ENCODE measurements at regions of chr7 and their contacts with region 1.

Region 1: DNA sequence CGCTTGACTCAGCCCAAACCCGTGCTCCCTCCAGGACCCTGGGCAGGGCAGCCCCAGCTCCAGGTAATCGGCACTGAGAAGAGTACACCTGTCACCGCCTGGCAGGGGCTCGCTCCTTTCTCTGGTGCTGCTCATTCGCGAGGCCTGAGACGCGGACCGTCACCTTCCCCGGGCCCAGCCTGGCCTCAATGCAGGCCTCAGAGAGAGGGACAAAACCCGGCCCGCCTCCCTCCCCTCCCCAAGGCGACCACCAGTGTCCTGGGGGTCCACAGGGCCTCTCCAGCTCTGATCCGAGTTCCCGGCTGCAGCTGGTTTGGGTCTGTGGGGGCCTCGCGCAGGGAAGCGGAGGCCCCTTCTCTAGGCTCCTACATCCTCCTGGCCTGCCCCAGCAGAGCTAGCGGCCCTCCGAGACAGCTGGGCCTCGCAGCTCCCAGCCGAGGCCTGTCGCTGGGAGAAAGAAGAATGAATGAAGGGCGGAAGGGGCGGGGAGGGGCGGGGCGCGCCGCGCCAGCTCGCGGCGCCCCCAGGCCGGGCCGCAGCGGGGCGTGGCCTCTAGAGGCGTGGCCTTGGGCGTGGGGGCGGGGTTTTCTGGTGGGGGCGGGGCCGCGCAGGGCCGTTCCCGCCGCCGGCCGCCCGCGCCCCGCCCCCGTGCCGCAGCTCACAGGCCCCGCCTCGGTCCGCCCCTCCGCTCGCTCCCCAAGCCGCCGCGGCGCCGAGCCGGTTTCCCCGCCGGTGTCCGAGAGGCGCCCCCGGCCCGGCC is at the start of gene LIMK1:
- H3K4me3 ChIP-seq: peak within 1 kb of the TSS; percentile 51
- H3K27ac ChIP-seq: peak within 1 kb of the TSS; percentile 70
- H3K4me1 ChIP-seq: peaks cover 9% of the 10 kb centered on the region
- CTCF ChIP-seq: no peak

Region 2: DNA sequence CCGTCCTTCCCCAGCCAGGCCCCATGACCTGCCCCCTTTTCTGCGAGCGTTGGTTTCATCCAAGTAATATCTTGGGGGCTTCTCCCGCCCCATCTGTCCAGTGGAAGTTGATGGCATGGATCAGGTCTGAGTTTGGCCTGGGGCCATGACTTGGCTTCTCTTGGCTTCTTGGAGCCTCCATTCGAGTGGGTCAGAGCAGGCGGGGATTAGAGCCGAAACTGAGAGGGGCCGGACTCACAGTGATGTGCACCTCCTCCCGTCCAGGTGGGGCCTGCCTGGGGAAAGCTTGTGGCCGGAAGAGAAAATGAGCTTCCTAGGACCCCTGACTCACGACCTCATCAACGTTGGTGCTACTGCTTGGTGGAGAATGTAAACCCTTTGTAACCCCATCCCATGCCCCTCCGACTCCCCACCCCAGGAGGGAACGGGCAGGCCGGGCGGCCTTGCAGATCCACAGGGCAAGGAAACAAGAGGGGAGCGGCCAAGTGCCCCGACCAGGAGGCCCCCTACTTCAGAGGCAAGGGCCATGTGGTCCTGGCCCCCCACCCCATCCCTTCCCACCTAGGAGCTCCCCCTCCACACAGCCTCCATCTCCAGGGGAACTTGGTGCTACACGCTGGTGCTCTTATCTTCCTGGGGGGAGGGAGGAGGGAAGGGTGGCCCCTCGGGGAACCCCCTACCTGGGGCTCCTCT is 14.8 kb before region 1 on chr7:
- CTCF ChIA-PET with region 1: interaction called, 20 read pairs
- POLR2A ChIA-PET with region 1: interaction called, 7 read pairs
- H3K4me3 ChIP-seq: no peak overlapping the region
- H3K27ac ChIP-seq: no peak overlapping the region
- H3K4me1 ChIP-seq: no peaks in the 10 kb centered on the region
- CTCF ChIP-seq: no peak

Region 3: DNA sequence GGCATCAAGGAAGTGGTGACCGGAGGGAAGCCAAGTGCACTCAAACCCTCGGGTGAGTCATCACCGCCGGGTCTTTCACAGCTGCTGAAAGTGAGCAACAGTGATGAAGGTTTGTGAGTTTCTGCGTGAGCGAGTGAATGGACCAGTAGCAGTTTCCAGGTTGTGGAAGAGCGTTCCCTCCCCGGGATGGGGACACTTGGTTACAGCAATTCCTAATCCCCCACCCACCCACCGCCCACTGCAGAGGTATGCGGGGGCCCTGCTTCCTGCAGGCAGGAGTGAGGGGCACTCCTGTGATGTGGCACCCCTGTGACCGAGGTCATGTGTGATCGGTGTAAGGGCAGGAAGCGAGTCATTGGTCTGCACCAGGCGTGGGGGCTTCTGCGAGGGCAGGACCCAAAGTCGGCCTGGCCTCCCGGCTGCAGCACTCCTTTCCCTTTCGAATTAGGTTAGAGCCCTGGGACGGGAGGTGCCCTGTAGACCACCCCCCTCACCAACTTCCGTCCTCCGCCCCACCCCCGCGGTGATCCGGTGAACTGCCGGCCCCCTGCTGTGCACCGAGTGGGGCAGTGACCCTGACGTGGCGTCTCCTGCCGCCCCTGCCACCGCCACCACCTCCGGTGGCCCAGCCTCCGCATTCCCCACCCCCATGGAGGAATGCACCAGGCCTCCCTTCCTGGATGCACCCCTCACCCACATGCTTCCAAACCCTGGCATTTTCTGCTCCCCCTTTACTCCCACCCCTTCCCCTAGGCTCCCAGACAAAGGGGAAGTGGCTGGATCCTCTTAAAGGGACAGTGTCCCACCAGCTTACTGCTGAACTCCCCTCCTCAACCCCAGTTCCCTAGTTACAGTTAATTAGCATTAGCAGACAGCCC is 11.2 kb after region 1 on chr7:
- CTCF ChIA-PET with region 1: interaction called, 3 read pairs
- POLR2A ChIA-PET with region 1: interaction called, 10 read pairs
- H3K4me3 ChIP-seq: peak overlapping the region; percentile 30
- H3K27ac ChIP-seq: no peak overlapping the region
- H3K4me1 ChIP-seq: no peaks in the 10 kb centered on the region
- CTCF ChIP-seq: no peak

Region 4: GRCh38 chr7:74173866-74174605 is 90.7 kb after region 1 on chr7 and contains the start of gene EIF4H:
- CTCF ChIA-PET with region 1: no interaction called
- POLR2A ChIA-PET with region 1: interaction called, 15 read pairs
- H3K4me3 ChIP-seq: peak within 1 kb of the TSS; percentile 86
- H3K27ac ChIP-seq: peak within 1 kb of the TSS; percentile 87
- H3K4me1 ChIP-seq: peaks cover 11% of the 10 kb centered on the region; the same call in 1 of the 2 replicates
- CTCF ChIP-seq: 0 out of 2 replicates have a peak, but pooled peaks have one; percentile 11